Activated T-helper 1 cell treated with anti-CD3 and anti-CD28 coated beads, Interleukin-12 subunit alpha, Interleukin-12 subunit beta, Interleukin-2, Interleukin-4 antibody, amounts not matched to agents 30 ng/mL and 10 ng/mL and 1 ng/mL, durations not matched to agents 14 hours and 24 hours and 36 hours (primary cell): ENCODE measurements at regions of chr13 and their contacts with region 1.

Region 1: DNA sequence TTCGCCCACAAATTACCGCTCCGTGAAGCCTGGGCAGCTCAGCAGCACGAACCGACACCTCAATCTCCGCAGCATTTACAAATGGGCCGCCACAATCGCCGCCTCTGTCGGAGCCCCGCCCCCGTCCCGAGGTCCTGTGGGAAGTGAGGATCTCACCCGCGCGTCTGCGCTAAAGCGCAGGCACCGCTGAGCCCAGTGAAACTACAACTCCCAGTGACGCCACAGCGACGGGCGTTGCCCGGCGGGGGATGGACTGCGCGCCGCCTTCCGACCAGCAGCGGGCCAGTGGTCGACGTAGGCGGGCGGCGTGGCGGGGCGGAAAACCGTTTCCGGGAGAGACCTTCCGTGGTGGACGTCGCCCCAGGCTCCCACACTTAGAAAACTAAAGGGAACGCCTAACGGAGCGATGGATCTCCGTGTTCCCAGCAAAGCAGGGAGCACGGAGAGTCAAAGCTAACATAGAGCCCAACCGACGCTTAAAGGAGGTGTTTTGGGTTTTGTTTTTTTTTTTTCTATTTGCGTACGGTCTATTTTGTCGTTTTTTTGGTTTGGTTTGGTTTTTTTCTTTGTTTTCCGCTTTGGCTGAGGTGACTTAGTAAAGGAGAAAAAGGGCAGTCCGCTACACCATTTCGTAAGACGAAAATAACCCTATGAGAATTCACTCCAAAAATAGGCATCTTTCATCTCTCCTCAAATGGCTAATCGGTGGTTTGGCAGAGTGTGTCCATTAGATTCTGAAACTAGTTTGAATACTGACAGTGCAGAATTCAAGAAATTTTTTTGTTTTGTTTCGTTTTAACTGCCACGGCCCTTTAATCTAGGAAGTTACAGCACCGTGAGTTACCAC is 159.0 kb downstream of the RNF17 start:
- DNase-seq: peak; percentile 95
- H3K4me3 Mint-ChIP-seq: peak overlapping the region; percentile 95
- H3K27ac Mint-ChIP-seq: peak overlapping the region; percentile 92
- H3K4me1 Mint-ChIP-seq: peaks cover 14% of the 10 kb centered on the region
- H3K27me3 Mint-ChIP-seq: peaks cover 2% of the 10 kb centered on the region

Region 2: GRCh38 chr13:24254146-24254841 is 668.7 kb before region 1 on chr13:
- intact Hi-C with region 1: loop called (anchors 5 kb)
- DNase-seq: peak; percentile 47
- H3K4me3 Mint-ChIP-seq: peak overlapping the region; percentile 86
- H3K27ac Mint-ChIP-seq: peak overlapping the region; percentile 91
- H3K4me1 Mint-ChIP-seq: peaks cover 84% of the 10 kb centered on the region
- H3K27me3 Mint-ChIP-seq: no peaks in the 10 kb centered on the region

Region 3: DNA sequence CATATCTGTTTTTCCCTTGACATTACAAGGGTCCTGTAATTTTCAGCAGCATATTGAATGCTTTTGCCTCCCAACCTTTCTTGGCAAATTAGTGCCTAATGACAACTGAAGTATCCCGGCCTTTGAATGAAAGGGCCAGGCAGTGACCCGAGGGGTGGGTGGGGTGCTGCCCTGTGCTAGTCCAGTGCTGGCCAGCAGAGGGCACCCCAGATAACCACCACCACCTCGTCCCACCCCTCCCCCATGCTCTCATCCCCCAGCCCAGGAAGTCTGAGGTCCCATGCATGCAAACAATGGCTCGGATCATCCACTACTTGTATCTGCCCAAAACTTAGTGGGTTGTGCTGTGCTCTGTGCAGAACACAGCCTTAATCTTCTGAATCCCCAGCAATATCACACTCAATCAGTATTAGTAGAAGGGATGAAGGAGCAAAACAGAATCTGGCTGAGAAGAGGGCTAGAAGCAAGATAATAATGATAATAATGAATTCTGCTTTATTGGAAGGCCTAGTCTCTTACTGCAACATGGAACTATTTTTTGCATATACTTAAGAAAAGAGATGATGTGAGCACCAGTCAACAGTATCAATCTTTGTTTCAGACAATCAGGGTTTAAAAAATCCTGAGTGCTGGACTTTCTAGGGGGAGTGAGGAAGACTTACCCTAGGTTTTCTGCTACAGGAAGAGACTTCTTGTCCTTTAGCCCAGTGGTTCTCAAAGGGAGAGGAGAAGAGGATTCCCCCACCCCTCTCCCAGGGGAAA is 238.9 kb before region 1 on chr13:
- intact Hi-C with region 1: loop called (anchors 2 kb)
- DNase-seq: peak; percentile 30
- H3K4me3 Mint-ChIP-seq: peak overlapping the region; percentile 28
- H3K27ac Mint-ChIP-seq: peak overlapping the region; percentile 57
- H3K4me1 Mint-ChIP-seq: peaks cover 32% of the 10 kb centered on the region
- H3K27me3 Mint-ChIP-seq: peaks cover 45% of the 10 kb centered on the region

Region 4: GRCh38 chr13:24709186-24709913 is 213.6 kb before region 1 on chr13:
- intact Hi-C with region 1: loop called (anchors 2 kb)
- DNase-seq: peak; percentile 66
- H3K4me3 Mint-ChIP-seq: peak overlapping the region; percentile 47
- H3K27ac Mint-ChIP-seq: peak overlapping the region; percentile 28
- H3K4me1 Mint-ChIP-seq: peaks cover 19% of the 10 kb centered on the region
- H3K27me3 Mint-ChIP-seq: peaks cover 4% of the 10 kb centered on the region